ENCODE measurements at regions of chr3 and their contacts with region 1.

Region 1: DNA sequence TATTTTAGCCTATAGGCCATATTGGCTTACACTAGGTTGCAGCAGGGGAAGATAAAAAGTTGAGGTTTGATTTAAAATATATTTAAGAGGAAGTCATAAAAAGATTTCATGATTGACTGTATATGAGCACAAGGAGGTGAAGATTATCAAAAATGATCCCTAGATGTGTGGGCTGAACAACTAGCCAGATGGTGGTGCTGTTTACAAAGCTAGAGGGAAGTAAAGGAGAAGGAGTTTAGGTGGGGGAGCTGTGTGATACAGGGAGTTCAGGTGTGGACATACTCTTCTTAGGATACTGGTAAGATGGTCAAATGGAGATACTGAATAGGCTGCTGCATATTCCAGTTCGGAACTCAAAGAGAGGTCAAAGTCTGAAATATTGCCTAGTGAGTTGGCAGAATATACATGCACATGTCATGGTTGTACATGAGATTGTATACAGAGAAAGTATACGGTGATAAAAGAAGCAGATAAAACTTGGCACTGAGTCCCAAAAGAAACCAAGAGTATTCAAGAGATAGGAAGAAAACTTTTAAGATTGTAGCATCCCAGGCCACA is 727.8 kb downstream of the NLGN1 start:
- DNase-seq: peak; percentile 71
- ATAC-seq: peak; percentile 82
- H3K4me3 ChIP-seq: no peak overlapping the region
- H3K27ac ChIP-seq: no peak overlapping the region
- H3K4me1 ChIP-seq: peaks cover 18% of the 10 kb centered on the region
- H3K27me3 ChIP-seq: no peaks in the 10 kb centered on the region
- CTCF ChIP-seq: peak; percentile 94

Region 2: GRCh38 chr3:174355505-174355904 is 230.2 kb after region 1 on chr3:
- CTCF ChIA-PET with region 1: no interaction called
- POLR2A ChIA-PET with region 1: no interaction called
- intact Hi-C with region 1: loop called (anchors 5 kb)
- DNase-seq: peak; percentile 48
- ATAC-seq: peak; percentile 81
- H3K4me3 ChIP-seq: no peak overlapping the region
- H3K27ac ChIP-seq: no peak overlapping the region
- H3K4me1 ChIP-seq: no peaks in the 10 kb centered on the region
- H3K27me3 ChIP-seq: no peaks in the 10 kb centered on the region
- CTCF ChIP-seq: peak; percentile 65

Region 3: DNA sequence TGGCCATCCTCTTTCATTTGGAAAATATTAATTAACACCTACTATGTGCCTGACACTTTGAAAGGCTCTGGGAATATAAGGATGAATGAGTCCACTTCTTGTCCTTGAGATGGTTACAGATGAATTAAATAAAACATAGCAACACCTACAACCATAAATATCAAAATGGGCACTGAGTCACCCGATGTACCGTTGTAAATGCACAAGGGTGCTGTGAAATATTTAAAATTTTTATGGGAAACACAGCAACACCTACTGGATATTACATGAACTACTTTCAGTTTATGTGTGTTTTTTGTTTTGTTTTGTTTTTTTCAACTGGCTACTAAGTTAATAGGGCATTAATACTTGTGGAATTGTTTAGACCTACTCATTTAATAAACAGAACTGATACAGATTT is 494.8 kb after region 1 on chr3:
- CTCF ChIA-PET with region 1: no interaction called
- POLR2A ChIA-PET with region 1: no interaction called
- intact Hi-C with region 1: loop called (anchors 5 kb)
- DNase-seq: peak; percentile 61
- ATAC-seq: peak; percentile 46
- H3K4me3 ChIP-seq: no peak overlapping the region
- H3K27ac ChIP-seq: no peak overlapping the region
- H3K4me1 ChIP-seq: no peaks in the 10 kb centered on the region
- H3K27me3 ChIP-seq: no peaks in the 10 kb centered on the region
- CTCF ChIP-seq: peak; percentile 69

Region 4: DNA sequence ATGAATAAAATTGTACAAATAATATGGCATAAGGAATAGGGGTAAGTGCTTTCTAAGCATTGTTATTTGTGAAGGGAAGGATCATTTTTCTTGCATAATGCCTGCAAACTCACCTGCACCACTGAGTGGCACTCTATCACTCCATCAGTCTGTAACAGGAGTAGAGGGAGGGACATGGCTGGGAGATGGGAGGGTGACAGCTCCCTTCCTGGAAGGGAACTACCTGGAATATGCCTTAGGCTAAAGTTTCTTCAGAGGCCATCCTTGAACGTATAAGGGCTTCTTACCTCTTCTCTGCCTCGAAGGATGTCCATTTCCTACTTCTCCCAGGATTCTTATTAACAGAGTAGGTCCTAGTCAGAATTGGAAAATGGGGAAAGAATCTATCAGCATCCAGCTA is 736.8 kb after region 1 on chr3:
- CTCF ChIA-PET with region 1: no interaction called
- POLR2A ChIA-PET with region 1: no interaction called
- intact Hi-C with region 1: loop called (anchors 10 kb)
- DNase-seq: peak; percentile 85
- ATAC-seq: peak; percentile 69
- H3K4me3 ChIP-seq: no peak overlapping the region
- H3K27ac ChIP-seq: peak overlapping the region; percentile 59; the same call in 1 of the 2 replicates
- H3K4me1 ChIP-seq: peaks cover 50% of the 10 kb centered on the region
- H3K27me3 ChIP-seq: no peaks in the 10 kb centered on the region
- CTCF ChIP-seq: peak; percentile 87